H1 (cell line): ENCODE measurements at regions of chr1 and their contacts with region 1.

Region 1: GRCh38 chr1:156414461-156415064 is 45.6 kb downstream of the RHBG start:
- DNase-seq: peak in 1 of 2 experiments; percentile 89
- H3K4me3 ChIP-seq: no peak overlapping the region
- H3K27ac ChIP-seq: no peak overlapping the region
- H3K4me1 ChIP-seq: peaks cover 2 to 11% (median 8%) of the 10 kb centered on the region in 4 experiments
- H3K27me3 ChIP-seq: peaks cover 0 to 7% (median 5%) of the 10 kb centered on the region in 4 experiments; a peak in 6 of 7 replicates
- CTCF ChIP-seq: no peak
- EP300 ChIP-seq: no peak
- POLR2A ChIP-seq: no peak
- RAD21 ChIP-seq: no peak

Region 2: DNA sequence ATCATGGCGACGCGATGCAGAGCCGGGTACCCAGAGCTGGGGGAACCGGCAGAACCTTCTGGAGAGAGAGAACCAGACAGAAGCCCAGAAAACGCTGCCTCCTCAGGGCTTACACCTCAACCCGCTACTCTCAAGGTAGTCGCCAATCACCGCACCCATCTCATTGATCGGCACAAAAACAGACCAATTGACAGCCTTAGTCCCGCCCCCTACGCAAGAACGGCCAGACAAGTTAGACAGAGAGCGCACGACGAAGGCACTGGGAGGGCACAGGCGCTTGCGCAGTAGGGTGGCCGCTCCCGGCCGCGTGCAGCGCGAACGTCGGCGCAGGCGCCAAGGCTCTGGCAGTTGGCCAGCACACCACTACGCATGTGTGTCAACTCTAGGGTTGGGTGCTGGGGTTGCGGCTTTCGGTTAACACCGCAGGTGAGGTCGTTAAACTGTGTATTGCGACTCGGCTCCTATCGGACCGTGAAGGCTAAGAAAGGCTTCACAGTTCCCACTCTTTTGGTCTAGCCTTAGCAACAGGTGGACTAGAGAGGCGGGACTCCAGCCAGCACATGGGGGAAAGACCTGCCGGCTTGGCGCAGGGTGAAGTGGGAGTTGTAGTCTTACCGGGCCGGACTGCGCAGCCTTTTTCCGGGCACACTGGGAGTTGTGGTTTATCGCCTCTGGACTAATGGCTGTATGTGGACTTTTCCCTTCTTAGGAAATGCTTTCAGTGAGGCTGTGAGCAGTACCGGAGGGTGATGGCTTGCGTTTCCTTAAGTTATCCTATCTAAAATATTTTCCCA is 76.2 kb before region 1 on chr1 and contains the starts of genes CCT3 and TSACC:
- CTCF ChIA-PET with region 1: no interaction called
- POLR2A ChIA-PET with region 1: no interaction called
- DNase-seq: peak; percentile 99 to 100
- H3K4me3 ChIP-seq: peak within 1 kb of the TSS; percentile 83 to 100 (median 94)
- H3K27ac ChIP-seq: peak within 1 kb of the TSS; percentile 81
- H3K4me1 ChIP-seq: 0 out of 7 replicates have a peak, but pooled peaks cover 0 to 2% (median 0%) of the 10 kb centered on the region in 4 experiments
- H3K27me3 ChIP-seq: no peaks in the 10 kb centered on the region
- CTCF ChIP-seq: no peak
- EP300 ChIP-seq: no peak
- POLR2A ChIP-seq: peak; percentile 54 to 91
- RAD21 ChIP-seq: no peak
- total RNA-seq, gene CCT3: 471 and 480 TPM in 2 replicates
- total RNA-seq, gene TSACC: 1.0 and 2.1 TPM in 2 replicates

Region 3: DNA sequence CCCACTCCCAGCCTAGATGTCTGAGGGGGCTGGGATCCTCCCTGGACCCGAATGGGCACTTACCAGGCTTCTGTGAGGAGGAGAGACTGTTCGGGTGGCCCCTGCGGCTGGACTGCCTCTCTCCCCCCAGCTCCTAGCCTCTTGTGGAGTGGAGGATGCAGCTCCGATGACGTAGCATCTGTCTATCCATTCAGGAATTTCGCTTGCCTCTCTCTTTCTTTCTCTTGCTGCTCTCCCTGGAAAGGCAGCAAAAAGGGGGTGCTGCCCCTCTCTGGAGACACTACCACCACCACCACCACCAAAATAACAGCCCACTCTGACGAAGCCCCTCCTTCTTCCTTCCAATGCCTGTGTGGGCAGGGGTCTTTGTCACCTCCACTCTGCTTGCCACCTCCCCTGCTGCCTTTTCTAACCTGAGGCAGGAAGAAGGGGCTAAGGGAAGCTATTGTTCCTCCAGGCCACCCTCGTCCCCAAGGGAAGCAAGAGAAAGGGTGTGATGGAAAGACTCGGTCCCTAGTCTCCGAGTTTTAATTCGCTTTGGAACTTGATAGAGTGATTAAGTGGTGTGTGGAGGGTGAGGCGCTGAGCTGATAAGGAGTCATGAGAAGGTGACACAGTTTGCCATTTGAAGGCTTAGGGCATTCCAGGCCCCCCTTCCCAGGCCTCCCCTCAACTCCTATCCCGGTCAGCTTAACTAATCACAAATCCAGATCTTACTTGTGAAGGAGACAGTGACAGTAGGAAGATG is 14.9 kb after region 1 on chr1:
- CTCF ChIA-PET with region 1: interaction called, 63 read pairs
- POLR2A ChIA-PET with region 1: interaction called, 15 read pairs
- DNase-seq: no peak
- H3K4me3 ChIP-seq: peak overlapping the region in 3 of 4 experiments; percentile 15 to 42 (median 17); a peak in 5 of 8 replicates
- H3K27ac ChIP-seq: no peak overlapping the region
- H3K4me1 ChIP-seq: peaks cover 14 to 30% (median 16%) of the 10 kb centered on the region in 4 experiments
- H3K27me3 ChIP-seq: peaks cover 72 to 100% (median 97%) of the 10 kb centered on the region in 4 experiments
- CTCF ChIP-seq: no peak
- EP300 ChIP-seq: no peak
- POLR2A ChIP-seq: no peak
- RAD21 ChIP-seq: no peak

Region 4: DNA sequence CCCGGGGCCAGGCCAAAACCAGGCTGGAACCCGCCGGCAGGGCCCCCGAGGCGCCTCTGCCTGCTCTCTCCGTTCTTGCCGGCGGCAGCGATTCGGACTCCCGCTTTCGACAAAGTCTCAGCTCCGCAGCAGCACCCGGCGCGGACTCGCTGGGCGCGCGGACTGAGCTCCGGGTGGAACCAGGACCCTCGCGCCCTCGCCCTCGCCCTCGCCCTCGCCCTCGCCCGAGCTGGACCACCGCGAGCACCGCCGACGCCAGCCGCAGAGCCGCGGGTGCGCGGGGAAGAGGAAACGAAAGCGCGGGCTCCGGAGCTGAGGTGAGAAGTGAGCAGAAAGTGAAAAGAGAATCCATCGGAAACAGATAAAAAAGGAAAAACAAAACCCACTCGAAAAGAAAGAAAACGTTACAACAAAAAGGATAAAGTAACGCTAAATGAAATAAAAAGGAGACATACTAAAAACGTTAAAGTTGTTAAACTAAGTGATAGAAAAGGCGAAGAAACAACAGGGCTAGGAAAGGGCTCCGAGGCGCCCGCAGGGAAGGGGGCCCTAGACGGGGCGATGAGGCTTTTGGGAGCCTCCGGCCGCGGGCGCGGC is 21.1 kb after region 1 on chr1:
- CTCF ChIA-PET with region 1: interaction called, 63 read pairs
- POLR2A ChIA-PET with region 1: interaction called, 15 read pairs
- DNase-seq: no peak
- H3K4me3 ChIP-seq: peak overlapping the region in 1 of 4 experiments; percentile 39; a peak in 2 of 8 replicates
- H3K27ac ChIP-seq: no peak overlapping the region
- H3K4me1 ChIP-seq: peaks cover 13 to 44% (median 17%) of the 10 kb centered on the region in 4 experiments
- H3K27me3 ChIP-seq: peaks cover 86 to 100% (median 98%) of the 10 kb centered on the region in 4 experiments
- CTCF ChIP-seq: no peak
- EP300 ChIP-seq: no peak
- POLR2A ChIP-seq: no peak
- RAD21 ChIP-seq: no peak